ENCODE measurements at regions of chr5 and their contacts with region 1.

Region 1: DNA sequence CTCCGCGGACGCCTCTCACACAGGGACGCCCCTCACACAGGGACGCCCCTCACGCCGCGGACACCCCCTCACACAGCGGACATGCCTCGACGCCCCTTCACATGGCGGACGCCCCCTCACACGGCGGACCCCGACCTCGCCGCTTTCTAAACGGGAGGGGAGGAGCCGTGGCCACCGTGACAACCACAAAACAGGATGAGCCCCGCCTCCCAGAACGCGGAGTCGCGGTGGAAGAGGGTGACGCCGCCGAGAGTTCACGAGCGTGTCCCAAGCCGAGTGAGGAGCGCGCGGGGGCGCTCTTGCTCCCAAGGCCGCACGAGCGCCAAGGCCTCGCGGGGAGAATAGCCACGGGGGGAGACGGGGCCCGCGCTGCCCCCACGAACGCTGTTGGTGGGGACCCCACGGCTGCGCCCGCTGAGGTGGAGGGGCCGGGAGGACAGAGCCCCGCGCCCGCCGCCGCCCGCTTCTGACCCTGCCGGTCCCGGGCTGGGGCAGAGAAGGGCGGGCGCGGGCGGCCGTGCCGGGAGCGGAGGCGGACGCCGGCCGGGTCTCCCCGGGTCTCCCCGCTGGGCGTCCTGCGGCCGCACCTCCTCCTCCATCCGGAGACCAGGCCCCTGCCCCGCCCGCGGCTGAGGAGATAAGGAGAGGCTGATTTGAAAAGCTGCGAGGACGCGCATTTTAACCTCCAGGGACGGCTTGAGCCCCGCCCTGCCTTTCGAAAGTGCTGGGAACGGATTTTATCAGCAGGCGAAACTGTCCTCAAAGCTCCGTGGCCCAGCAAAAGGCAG is 3.9 kb upstream of the NKD2 start:
- DNase-seq: peak in 4 of 5 donors; percentile 43 to 52 (median 47)
- H3K4me3 ChIP-seq: peak overlapping the region in 1 of 2 donors; percentile 38
- H3K4me3 Mint-ChIP-seq: peak overlapping the region; percentile 69 to 83 (median 76)
- H3K27ac ChIP-seq: no peak overlapping the region
- H3K27ac Mint-ChIP-seq: peak overlapping the region in 2 of 7 donors; percentile 36 to 56
- H3K4me1 ChIP-seq: peaks cover 24% of the 10 kb centered on the region
- H3K4me1 Mint-ChIP-seq: peaks cover 10 to 37% (median 24%) of the 10 kb centered on the region in 4 donors
- H3K27me3 ChIP-seq: peaks cover 15% of the 10 kb centered on the region
- H3K27me3 Mint-ChIP-seq: peaks cover 12 to 29% of the 10 kb centered on the region in 2 donors

Region 2: GRCh38 chr5:671459-672328 is 333.0 kb before region 1 on chr5:
- CTCF ChIA-PET with region 1: no interaction called
- POLR2A ChIA-PET with region 1: no interaction called
- intact Hi-C with region 1: loop called (anchors 10 kb)
- DNase-seq: peak; percentile 73 to 80 (median 77)
- H3K4me3 ChIP-seq: peak overlapping the region in 1 of 2 donors; percentile 4
- H3K4me3 Mint-ChIP-seq: peak overlapping the region in 5 of 8 donors; percentile 79 to 92 (median 82)
- H3K27ac ChIP-seq: peak overlapping the region; percentile 59
- H3K27ac Mint-ChIP-seq: peak overlapping the region; percentile 29 to 100 (median 99)
- H3K4me1 ChIP-seq: peaks cover 29% of the 10 kb centered on the region
- H3K4me1 Mint-ChIP-seq: peaks cover 7 to 26% (median 13%) of the 10 kb centered on the region in 4 donors
- H3K27me3 ChIP-seq: no peaks in the 10 kb centered on the region
- H3K27me3 Mint-ChIP-seq: peaks cover 0 to 3% of the 10 kb centered on the region in 2 donors

Region 3: GRCh38 chr5:923281-923873 is 81.3 kb before region 1 on chr5:
- CTCF ChIA-PET with region 1: interaction called, 4 read pairs
- POLR2A ChIA-PET with region 1: no interaction called
- intact Hi-C with region 1: loop called (anchors 2 kb)
- DNase-seq: peak in 4 of 5 donors; percentile 47 to 61 (median 58)
- H3K4me3 ChIP-seq: no peak overlapping the region
- H3K4me3 Mint-ChIP-seq: no peak overlapping the region
- H3K27ac ChIP-seq: no peak overlapping the region
- H3K27ac Mint-ChIP-seq: peak overlapping the region in 1 of 7 donors; percentile 24
- H3K4me1 ChIP-seq: no peaks in the 10 kb centered on the region
- H3K4me1 Mint-ChIP-seq: peaks cover 0 to 5% (median 2%) of the 10 kb centered on the region in 4 donors
- H3K27me3 ChIP-seq: peaks cover 4% of the 10 kb centered on the region
- H3K27me3 Mint-ChIP-seq: peaks cover 15 to 26% of the 10 kb centered on the region in 2 donors

Region 4: GRCh38 chr5:1140171-1140817 is 135.6 kb after region 1 on chr5:
- CTCF ChIA-PET with region 1: interaction called, 17 read pairs
- POLR2A ChIA-PET with region 1: interaction called, 3 read pairs
- intact Hi-C with region 1: loop called (anchors 2 kb)
- DNase-seq: peak; percentile 69 to 85 (median 77)
- H3K4me3 ChIP-seq: no peak overlapping the region
- H3K4me3 Mint-ChIP-seq: no peak overlapping the region
- H3K27ac ChIP-seq: no peak overlapping the region
- H3K27ac Mint-ChIP-seq: peak overlapping the region in 2 of 7 donors; percentile 13 to 78
- H3K4me1 ChIP-seq: no peaks in the 10 kb centered on the region
- H3K4me1 Mint-ChIP-seq: peaks cover 0 to 7% (median 2%) of the 10 kb centered on the region in 4 donors
- H3K27me3 ChIP-seq: no peaks in the 10 kb centered on the region
- H3K27me3 Mint-ChIP-seq: peaks cover 4 to 7% of the 10 kb centered on the region in 2 donors

Measured in CD4-positive, alpha-beta memory T cell (primary cell).